Motor neuron (in vitro differentiated cells): ENCODE measurements at regions of chr5 and their contacts with region 1.

Region 1: GRCh38 chr5:5492087-5492933 is 69.8 kb downstream of the ICE1 start:
- ATAC-seq: peak in 4 of 8 experiments; percentile 19 to 43 (median 34)
- H3K4me3 ChIP-seq: no peak overlapping the region
- H3K27ac ChIP-seq: no peak overlapping the region
- H3K4me1 ChIP-seq: peaks cover 7 to 13% of the 10 kb centered on the region in 2 donors

Region 2: GRCh38 chr5:5979377-5980079 is 487.2 kb after region 1 on chr5:
- in situ Hi-C with region 1: no loop called
- ATAC-seq: peak; percentile 64 to 98 (median 91)
- H3K4me3 ChIP-seq: no peak overlapping the region
- H3K27ac ChIP-seq: no peak overlapping the region
- H3K4me1 ChIP-seq: peaks cover 18 to 27% of the 10 kb centered on the region in 2 donors

Region 3: DNA sequence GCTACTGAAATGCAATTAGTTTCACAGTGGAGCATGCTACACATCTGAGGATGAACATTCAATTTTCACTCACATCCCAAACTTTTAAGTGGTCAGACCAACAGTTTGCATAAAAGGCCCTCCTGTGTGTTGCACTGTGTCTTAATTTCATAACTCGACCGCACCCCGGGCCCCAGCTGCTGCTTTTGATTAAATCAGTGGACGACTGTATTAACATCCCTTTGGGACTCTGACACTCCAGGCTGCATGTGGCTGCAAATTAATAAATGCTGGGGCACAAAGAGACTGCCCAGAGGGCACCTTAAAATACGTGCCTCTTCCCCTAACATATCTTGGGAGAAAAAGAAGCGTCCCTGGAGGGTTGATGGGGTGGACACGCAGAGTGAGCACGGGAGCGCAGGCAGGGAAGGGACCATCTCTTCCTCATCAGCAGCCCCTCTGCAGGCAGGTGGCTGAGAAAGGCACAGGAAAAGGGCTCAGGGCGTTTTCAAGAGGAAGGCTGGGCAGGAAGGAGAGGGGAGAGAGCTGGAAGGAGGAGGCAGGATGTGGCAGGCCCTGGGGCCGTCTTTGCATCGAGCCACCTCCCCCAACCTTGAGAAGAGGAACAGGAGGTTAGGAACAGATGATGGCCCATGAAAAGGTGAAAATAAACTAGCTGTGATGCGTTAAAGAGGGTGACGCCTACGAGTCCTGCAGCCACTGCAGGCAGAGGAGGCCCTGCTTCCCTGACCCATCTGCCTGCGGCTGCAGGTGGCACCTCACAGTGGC is 867.4 kb after region 1 on chr5:
- in situ Hi-C with region 1: loop called in 1 of 9 experiments (anchors 25 kb)
- ATAC-seq: peak; percentile 9 to 97 (median 52)
- H3K4me3 ChIP-seq: no peak overlapping the region
- H3K27ac ChIP-seq: peak overlapping the region; percentile 62 to 70
- H3K4me1 ChIP-seq: peaks cover 26 to 44% of the 10 kb centered on the region in 2 donors

Region 4: DNA sequence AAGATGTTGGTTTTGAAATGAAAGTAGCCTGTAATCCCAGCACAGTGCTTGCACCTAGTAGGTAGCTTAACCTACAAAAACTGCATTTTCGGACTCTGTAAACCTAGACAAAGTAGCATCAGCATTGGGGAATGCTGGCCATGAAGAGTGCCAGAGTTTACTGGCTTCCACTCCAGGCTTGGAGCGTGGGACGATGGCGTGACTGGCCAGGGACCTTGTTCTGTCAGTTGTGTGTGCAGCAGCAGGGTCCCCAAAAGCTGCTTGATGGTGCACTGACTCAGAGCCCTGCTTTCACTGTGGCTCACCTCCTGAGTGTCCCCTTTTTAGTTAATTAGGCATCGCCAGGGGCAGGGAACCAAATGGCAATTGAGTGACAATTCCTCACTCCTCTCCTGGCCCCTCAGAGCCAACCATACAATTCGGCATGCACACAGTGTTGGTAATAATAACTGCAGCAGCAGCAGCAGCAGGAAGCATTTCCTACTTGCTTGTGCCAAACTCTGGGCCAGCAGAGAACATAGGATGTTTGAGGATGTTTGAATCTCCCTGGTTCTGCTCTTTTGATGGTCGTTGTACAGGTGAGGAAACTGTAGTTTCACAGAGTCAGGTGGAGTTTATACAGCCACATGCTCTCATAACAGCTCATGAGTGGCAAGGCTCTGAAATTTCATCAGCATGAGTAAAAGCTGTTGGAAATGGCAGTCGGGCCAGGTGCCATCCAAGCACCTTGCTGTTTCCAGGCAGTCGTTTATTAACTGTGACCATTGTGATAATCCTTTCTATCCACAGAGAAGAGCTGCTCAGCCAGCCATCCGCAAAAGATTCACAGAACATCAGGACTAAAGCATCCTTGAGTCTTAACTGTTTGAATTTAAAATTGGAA is 960.6 kb after region 1 on chr5:
- in situ Hi-C with region 1: loop called in 1 of 9 experiments (anchors 25 kb)
- ATAC-seq: no peak
- H3K4me3 ChIP-seq: peak overlapping the region; percentile 4 to 99 (median 15)
- H3K27ac ChIP-seq: no peak overlapping the region
- H3K4me1 ChIP-seq: peaks cover 11 to 34% of the 10 kb centered on the region in 2 donors

Region 5: DNA sequence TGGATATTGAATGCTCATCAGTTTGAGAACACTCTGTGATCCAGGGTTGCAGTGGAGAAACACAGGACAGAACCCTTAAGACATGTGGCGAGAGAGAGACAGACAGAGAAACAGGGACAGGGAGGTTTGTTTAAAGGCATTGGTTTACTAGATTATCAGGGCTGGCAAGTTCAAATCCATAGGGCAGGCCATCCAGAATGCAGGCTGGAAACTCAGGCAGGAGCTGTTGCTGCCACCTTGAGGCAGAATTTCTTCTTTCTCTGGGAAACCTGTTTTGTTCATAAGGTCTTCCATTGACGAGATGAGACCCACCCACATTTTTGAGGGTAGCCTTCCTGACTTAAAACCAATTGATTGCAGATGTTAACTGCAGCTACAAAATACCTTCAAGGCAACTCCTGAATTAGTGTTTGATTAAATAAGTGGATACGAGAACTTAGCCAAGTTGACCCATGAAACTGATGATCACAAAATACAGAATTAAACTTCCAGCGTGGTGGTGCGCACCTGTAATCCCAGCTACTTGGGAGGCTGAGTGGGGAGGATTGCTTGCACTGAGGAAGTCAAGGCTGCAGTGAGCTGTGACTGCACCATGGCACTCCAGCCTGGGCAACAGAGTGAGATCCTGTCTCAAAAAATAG is 1084.7 kb after region 1 on chr5:
- in situ Hi-C with region 1: loop called in 4 of 9 experiments (anchors 25 kb)
- ATAC-seq: peak in 3 of 8 experiments; percentile 76 to 83 (median 80)
- H3K4me3 ChIP-seq: no peak overlapping the region
- H3K27ac ChIP-seq: no peak overlapping the region
- H3K4me1 ChIP-seq: peaks cover 10 to 33% of the 10 kb centered on the region in 2 donors

Region 6: DNA sequence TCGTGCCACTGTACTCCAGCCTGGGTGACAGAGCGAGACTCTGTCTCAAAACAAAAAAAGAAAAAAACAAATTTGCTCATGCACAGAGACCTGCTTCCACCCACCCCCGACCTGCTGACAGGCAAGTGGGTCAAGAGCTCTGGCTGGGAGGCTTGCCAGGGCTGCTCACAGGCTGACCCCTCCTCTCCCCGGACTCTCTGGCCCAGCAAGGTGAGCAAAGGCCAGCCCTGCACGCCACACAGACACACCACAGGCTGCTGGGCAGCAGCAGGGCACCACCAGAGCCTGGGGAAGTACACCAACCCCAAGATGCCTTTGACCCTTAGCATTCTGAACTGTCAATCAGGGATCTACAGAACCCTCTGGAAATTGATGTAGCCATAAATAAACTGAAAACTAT is 1111.3 kb after region 1 on chr5:
- in situ Hi-C with region 1: loop called in 3 of 9 experiments (anchors 25 kb)
- ATAC-seq: no peak
- H3K4me3 ChIP-seq: no peak overlapping the region
- H3K27ac ChIP-seq: no peak overlapping the region
- H3K4me1 ChIP-seq: peaks cover 8 to 17% of the 10 kb centered on the region in 2 donors

Region 7: DNA sequence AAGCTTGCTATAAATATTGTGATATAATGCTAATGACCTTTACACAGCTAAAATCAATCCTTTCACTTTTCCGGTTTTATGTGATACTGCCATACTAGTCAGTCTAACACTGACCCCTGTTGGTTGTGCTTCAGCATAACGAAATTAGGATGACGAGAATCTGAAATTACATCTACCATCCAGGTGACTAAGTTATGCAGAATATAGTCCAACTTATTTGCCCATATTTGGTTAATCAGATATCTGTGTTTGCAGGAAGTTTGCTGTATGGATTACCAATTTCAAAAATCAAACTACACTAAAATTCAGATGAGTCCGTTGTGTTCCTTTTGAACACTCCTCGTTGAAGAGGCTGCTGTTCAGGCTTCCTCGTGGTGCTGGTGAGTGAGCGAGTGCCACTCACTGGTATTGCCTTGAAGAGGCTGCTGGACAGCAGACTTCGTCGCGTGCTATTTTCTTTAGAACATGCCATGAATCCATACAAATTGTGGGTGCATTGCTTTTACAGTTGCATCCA is 1253.5 kb after region 1 on chr5:
- in situ Hi-C with region 1: loop called in 6 of 9 experiments (anchors 25 kb)
- ATAC-seq: peak; percentile 43 to 96 (median 66)
- H3K4me3 ChIP-seq: no peak overlapping the region
- H3K27ac ChIP-seq: no peak overlapping the region
- H3K4me1 ChIP-seq: peaks cover 3 to 8% of the 10 kb centered on the region in 2 donors